ENCODE measurements at regions of chr16 and their contacts with region 1.

Region 1: DNA sequence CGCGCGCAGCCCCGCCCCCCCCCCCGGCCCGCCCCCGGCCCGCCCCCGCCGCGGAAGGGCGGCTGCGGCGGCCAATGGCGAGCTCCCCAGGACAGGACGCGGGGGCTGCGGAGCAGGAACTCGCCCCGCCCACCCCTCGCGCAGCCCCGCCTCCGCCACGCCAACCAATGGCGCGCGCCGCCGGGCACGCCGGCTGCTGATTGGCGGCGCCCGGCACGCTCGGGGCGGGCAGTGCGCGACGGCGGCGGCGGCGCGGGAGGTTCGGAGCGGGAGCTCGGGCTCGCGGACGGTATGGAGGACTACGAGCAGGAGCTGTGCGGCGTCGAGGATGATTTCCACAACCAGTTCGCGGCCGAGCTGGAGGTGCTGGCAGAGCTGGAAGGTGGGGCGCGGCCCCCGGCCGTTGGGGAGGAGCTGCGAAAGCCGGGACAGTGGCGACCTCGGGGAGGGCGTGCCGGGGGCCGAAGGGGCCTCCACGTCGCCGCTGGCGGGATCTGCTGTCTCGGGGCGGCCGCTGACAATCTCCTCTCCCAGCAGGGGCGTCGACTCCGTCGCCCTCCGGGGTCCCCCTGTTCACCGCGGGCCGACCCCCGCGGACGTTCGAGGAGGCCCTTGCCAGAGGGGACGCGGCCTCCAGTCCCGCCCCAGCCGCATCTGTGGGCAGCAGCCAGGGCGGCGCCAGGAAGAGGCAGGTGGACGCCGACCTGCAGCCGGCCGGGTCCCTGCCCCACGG is at the start of gene CHTF18:
- DNase-seq: peak; percentile 94
- total RNA-seq, gene CHTF18: 7.1 TPM

Region 2: DNA sequence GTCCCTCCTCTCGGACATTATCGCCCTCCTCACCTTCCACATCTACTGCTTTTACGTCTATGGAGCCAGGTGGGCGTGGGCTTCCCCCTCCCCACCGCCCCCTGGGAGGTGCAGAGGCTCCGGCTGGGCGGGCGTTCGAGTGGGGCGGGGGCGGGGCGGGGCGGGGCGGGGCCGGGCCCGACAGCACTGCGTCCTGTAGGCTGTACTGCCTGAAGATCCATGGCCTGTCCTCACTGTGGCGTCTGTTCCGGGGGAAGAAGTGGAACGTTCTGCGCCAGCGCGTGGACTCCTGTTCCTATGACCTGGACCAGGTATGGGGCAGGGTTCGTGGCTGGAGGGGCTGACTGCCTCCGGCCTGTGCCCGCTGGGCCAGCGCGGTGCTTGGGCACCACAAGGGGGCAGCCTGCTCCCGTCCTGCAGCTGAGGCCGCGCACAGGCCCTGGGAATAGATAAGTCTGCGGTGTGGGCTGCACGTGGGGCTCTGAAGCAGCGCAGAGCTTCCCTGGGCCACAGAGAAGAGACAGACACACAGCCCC is 209.6 kb before region 1 on chr16:
- intact Hi-C with region 1: loop called (anchors 5 kb)
- DNase-seq: peak; percentile 85

Region 3: GRCh38 chr16:714558-715476 is 73.7 kb before region 1 on chr16 and contains the start of gene METRN:
- intact Hi-C with region 1: loop called (anchors 1 kb)
- DNase-seq: peak; percentile 94
- total RNA-seq, gene METRN: 73.3 TPM

Region 4: GRCh38 chr16:740764-741505 is 47.6 kb before region 1 on chr16 and contains the start of gene CIAO3:
- intact Hi-C with region 1: loop called (anchors 5 kb)
- DNase-seq: peak; percentile 95
- total RNA-seq, gene CIAO3: 21.7 TPM

Measured in cardiac septum (tissue), 1 donor.